HepG2 (cell line): ENCODE measurements at regions of chr3 and their contacts with region 1.

Region 1: DNA sequence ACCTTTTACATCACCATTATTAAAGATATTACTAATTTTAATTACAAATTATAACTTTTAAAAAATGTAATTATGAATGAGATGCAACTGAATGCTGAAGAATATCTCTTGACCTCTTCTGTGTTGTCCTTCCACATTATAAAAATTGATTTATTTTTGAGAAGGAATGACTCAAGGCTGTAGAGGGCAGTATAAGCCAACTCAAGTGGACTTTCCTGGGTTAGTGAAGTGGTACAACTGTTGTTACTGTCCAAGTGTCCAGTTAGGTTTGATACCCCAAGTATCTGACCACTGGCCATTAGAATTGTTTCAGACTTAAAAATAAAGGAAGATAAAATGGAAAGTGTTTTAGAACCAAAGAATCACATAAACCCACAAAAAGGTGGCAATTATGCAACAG is 51.9 kb downstream of the BBX start:
- DNase-seq: peak; percentile 48
- ATAC-seq: peak; percentile 71
- H3K4me3 ChIP-seq: no peak overlapping the region
- H3K27ac ChIP-seq: no peak overlapping the region
- H3K4me1 ChIP-seq: no peaks in the 10 kb centered on the region
- H3K27me3 ChIP-seq: no peaks in the 10 kb centered on the region
- CTCF ChIP-seq: peak; percentile 68
- EP300 ChIP-seq: no peak
- POLR2A ChIP-seq: no peak
- RAD21 ChIP-seq: no peak

Region 2: GRCh38 chr3:107660306-107660976 is 85.8 kb after region 1 on chr3:
- CTCF ChIA-PET with region 1: no interaction called
- POLR2A ChIA-PET with region 1: no interaction called
- in situ Hi-C with region 1: no loop called
- intact Hi-C with region 1: loop called (anchors 5 kb)
- DNase-seq: peak; percentile 39
- ATAC-seq: no peak
- H3K4me3 ChIP-seq: no peak overlapping the region
- H3K27ac ChIP-seq: no peak overlapping the region
- H3K4me1 ChIP-seq: no peaks in the 10 kb centered on the region
- H3K27me3 ChIP-seq: no peaks in the 10 kb centered on the region
- CTCF ChIP-seq: peak; percentile 33; the same call in 1 of the 2 replicates
- EP300 ChIP-seq: no peak
- POLR2A ChIP-seq: no peak
- RAD21 ChIP-seq: no peak

Region 3: GRCh38 chr3:107740992-107741896 is 166.6 kb after region 1 on chr3:
- CTCF ChIA-PET with region 1: interaction called, 4 read pairs
- POLR2A ChIA-PET with region 1: no interaction called
- in situ Hi-C with region 1: loop called (anchors 10 kb)
- intact Hi-C with region 1: no loop called
- DNase-seq: peak; percentile 8
- ATAC-seq: no peak
- H3K4me3 ChIP-seq: no peak overlapping the region
- H3K27ac ChIP-seq: no peak overlapping the region
- H3K4me1 ChIP-seq: peaks cover 11% of the 10 kb centered on the region; the same call in 1 of the 2 replicates
- H3K27me3 ChIP-seq: no peaks in the 10 kb centered on the region; a peak in 1 of 5 replicates
- CTCF ChIP-seq: peak; percentile 36; the same call in 1 of the 2 replicates
- EP300 ChIP-seq: no peak
- POLR2A ChIP-seq: no peak
- RAD21 ChIP-seq: 0 out of 2 replicates have a peak, but pooled peaks have one; percentile 34

Region 4: GRCh38 chr3:107753480-107753879 is 178.8 kb after region 1 on chr3:
- CTCF ChIA-PET with region 1: no interaction called
- POLR2A ChIA-PET with region 1: no interaction called
- in situ Hi-C with region 1: loop called (anchors 10 kb)
- intact Hi-C with region 1: loop called (anchors 5 kb)
- DNase-seq: peak; percentile 47
- ATAC-seq: peak; percentile 98
- H3K4me3 ChIP-seq: no peak overlapping the region
- H3K27ac ChIP-seq: no peak overlapping the region
- H3K4me1 ChIP-seq: no peaks in the 10 kb centered on the region
- H3K27me3 ChIP-seq: no peaks in the 10 kb centered on the region
- CTCF ChIP-seq: peak; percentile 76
- EP300 ChIP-seq: no peak
- POLR2A ChIP-seq: no peak
- RAD21 ChIP-seq: 0 out of 2 replicates have a peak, but pooled peaks have one; percentile 39

Region 5: GRCh38 chr3:107846279-107846852 is 271.7 kb after region 1 on chr3:
- CTCF ChIA-PET with region 1: no interaction called
- POLR2A ChIA-PET with region 1: no interaction called
- in situ Hi-C with region 1: loop called (anchors 10 kb)
- intact Hi-C with region 1: loop called (anchors 1 kb)
- DNase-seq: peak; percentile 47
- ATAC-seq: peak; percentile 97
- H3K4me3 ChIP-seq: peak overlapping the region in 1 of 3 experiments; percentile 0; a peak in 1 of 6 replicates
- H3K27ac ChIP-seq: no peak overlapping the region
- H3K4me1 ChIP-seq: peaks cover 35% of the 10 kb centered on the region
- H3K27me3 ChIP-seq: peaks cover 0 to 15% of the 10 kb centered on the region in 2 experiments; a peak in 2 of 5 replicates
- CTCF ChIP-seq: peak; percentile 89
- EP300 ChIP-seq: no peak
- POLR2A ChIP-seq: no peak
- RAD21 ChIP-seq: peak; percentile 74

Region 6: DNA sequence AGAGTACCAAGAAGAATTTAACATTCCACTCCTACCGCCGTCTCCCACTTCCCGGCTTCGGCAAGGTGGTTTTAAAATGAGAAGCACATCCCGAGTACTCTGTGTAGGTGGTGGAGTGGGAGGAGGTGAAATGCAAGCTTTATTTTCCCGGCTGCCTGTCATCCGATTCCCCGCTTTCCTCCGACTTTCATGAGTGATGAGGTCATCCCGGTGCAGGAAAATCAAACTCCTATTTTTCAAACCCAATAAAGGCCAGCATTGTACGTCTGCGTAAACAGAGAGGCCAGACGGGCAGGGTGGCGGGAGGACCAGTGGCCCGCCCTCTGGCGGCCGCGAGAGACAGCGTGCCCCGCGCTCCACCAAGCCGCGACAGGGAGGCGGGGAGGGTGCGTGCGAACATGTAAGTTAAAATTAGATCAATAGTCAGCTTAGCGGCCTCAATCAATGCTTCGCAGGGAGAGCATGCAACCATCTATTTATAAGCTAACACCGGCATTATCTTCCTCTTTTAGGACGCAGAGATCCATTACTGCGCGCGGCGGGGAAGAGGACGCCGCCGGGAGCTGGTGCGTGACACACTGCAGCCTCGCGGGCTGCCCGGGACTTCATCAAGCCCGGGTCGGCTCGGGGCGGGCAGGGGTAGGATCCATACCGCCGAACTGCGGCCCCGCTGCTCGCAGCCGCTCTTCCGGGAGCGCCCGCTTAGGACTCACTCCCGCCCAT is 352.9 kb after region 1 on chr3:
- CTCF ChIA-PET with region 1: interaction called, 5 read pairs
- POLR2A ChIA-PET with region 1: no interaction called
- in situ Hi-C with region 1: no loop called
- intact Hi-C with region 1: loop called (anchors 1 kb)
- DNase-seq: peak; percentile 66
- ATAC-seq: peak; percentile 100
- H3K4me3 ChIP-seq: peak overlapping the region; percentile 55 to 63 (median 57)
- H3K27ac ChIP-seq: no peak overlapping the region
- H3K4me1 ChIP-seq: peaks cover 6% of the 10 kb centered on the region; the same call in 1 of the 2 replicates
- H3K27me3 ChIP-seq: peaks cover 4 to 21% of the 10 kb centered on the region in 2 experiments; a peak in 4 of 5 replicates
- CTCF ChIP-seq: peak; percentile 91
- EP300 ChIP-seq: peak in 1 of 2 experiments; percentile 7; a peak in 1 of 4 replicates
- POLR2A ChIP-seq: no peak
- RAD21 ChIP-seq: peak; percentile 76

Region 7: GRCh38 chr3:108477511-108478147 is 903.0 kb after region 1 on chr3:
- CTCF ChIA-PET with region 1: no interaction called
- POLR2A ChIA-PET with region 1: no interaction called
- in situ Hi-C with region 1: no loop called
- intact Hi-C with region 1: loop called (anchors 2 kb)
- DNase-seq: peak; percentile 52
- ATAC-seq: peak; percentile 80
- H3K4me3 ChIP-seq: no peak overlapping the region
- H3K27ac ChIP-seq: no peak overlapping the region
- H3K4me1 ChIP-seq: no peaks in the 10 kb centered on the region
- H3K27me3 ChIP-seq: no peaks in the 10 kb centered on the region; a peak in 1 of 5 replicates
- CTCF ChIP-seq: peak; percentile 71
- EP300 ChIP-seq: no peak
- POLR2A ChIP-seq: no peak
- RAD21 ChIP-seq: no peak